ENCODE measurements at regions of chr2 and their contacts with region 1.

Region 1: GRCh38 chr2:182980115-182980514 is 58.1 kb downstream of the NCKAP1 start:
- DNase-seq: no peak
- H3K4me3 ChIP-seq: no peak overlapping the region
- H3K27ac ChIP-seq: no peak overlapping the region
- H3K4me1 ChIP-seq: no peaks in the 10 kb centered on the region
- H3K27me3 ChIP-seq: no peaks in the 10 kb centered on the region
- CTCF ChIP-seq: peak; percentile 30 to 67 (median 56)
- POLR2A ChIP-seq: no peak

Region 2: DNA sequence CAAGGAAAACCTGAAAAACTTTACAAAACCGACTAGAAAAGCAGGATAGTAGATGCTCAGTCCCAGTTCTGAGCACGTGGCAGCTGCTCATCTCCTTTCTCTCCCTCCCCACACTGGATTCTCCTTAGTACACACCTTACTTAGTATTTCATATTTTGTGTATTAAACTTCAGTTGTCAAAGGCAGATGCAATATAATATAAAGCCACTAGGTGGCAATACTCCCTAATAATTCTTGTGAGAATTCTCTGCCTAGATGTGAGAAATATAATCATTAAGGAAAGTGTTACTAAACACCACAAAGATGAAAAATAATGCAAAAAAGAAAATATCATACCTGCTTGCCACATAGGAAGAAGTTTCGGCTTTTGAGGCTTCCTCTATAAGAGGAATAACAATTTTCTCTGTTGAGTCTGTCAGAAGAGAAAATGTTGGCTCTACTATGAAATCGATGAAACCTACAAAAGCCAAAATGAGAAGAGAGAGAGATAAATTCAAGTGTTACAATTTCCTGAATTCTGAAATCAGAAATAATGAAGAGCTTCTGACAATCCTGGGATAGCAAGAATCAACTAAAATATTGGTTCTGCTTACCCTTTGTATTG is 793.9 kb before region 1 on chr2:
- intact Hi-C with region 1: loop called (anchors 10 kb)
- DNase-seq: no peak
- H3K4me3 ChIP-seq: no peak overlapping the region
- H3K27ac ChIP-seq: no peak overlapping the region
- H3K4me1 ChIP-seq: no peaks in the 10 kb centered on the region
- H3K27me3 ChIP-seq: no peaks in the 10 kb centered on the region
- CTCF ChIP-seq: peak; percentile 59 to 87 (median 75)
- POLR2A ChIP-seq: no peak

Region 3: DNA sequence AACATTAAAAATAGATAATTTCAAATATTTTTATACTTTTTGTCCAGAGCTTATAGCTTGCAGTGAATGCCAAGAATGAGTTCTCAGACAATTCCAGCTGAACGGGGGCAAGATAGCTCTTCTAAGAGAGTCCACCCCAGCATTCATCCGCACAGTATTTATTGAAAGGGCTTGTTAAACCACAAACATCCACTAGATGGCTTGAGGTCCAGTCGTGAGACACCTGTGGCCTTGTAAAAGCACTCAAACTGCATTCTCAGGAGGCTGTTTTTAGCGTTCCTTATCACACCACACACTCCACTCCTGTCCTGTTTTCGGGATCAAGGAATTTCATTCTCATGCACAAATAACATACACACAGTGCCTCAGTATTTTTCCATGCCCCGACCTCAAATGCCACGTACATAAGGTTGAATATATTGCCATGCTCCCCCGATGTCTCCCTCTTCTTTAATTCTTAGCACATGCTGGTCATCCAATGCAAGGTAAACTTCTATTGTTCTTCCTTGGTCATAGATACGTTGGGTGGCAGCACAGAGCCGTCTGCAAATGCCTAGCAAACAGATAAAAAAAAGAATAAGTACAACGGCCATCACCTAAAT is 216.7 kb before region 1 on chr2:
- intact Hi-C with region 1: loop called (anchors 10 kb)
- DNase-seq: no peak
- H3K4me3 ChIP-seq: no peak overlapping the region
- H3K27ac ChIP-seq: peak overlapping the region in 2 of 8 donors; percentile 12 to 40
- H3K4me1 ChIP-seq: peaks cover 0 to 17% (median 0%) of the 10 kb centered on the region in 6 donors
- H3K27me3 ChIP-seq: no peaks in the 10 kb centered on the region
- CTCF ChIP-seq: peak in 7 of 11 experiments; percentile 15 to 59 (median 41)
- POLR2A ChIP-seq: no peak

Measured in spleen (tissue), 13 donors.